Heart right ventricle (tissue), 16 donors: ENCODE measurements at regions of chr3 and their contacts with region 1.

Region 1: GRCh38 chr3:98039322-98040024 is 4.4 kb upstream of the GABRR3 start:
- DNase-seq: peak in 1 of 2 donors; percentile 49
- ATAC-seq: peak; percentile 55 to 89 (median 82)
- H3K4me3 ChIP-seq: peak overlapping the region in 6 of 10 donors; percentile 32 to 40 (median 37)
- H3K27ac ChIP-seq: peak overlapping the region in 1 of 10 donors; percentile 2
- H3K4me1 ChIP-seq: peaks cover 0 to 6% (median 0%) of the 10 kb centered on the region in 9 donors
- H3K27me3 ChIP-seq: peaks cover 0 to 22% (median 10%) of the 10 kb centered on the region in 7 donors
- CTCF ChIP-seq: peak; percentile 70 to 87 (median 84)

Region 2: GRCh38 chr3:98329392-98330124 is 290.1 kb after region 1 on chr3:
- intact Hi-C with region 1: loop called (anchors 2 to 10 kb)
- DNase-seq: peak in 1 of 2 donors; percentile 18
- ATAC-seq: peak in 5 of 8 donors; percentile 25 to 58 (median 52)
- H3K4me3 ChIP-seq: no peak overlapping the region
- H3K27ac ChIP-seq: no peak overlapping the region
- H3K4me1 ChIP-seq: no peaks in the 10 kb centered on the region
- H3K27me3 ChIP-seq: peaks cover 0 to 19% (median 3%) of the 10 kb centered on the region in 7 donors
- CTCF ChIP-seq: peak; percentile 27 to 71 (median 62)

Region 3: GRCh38 chr3:98573181-98573728 is 533.8 kb after region 1 on chr3:
- intact Hi-C with region 1: loop called in 2 of 10 experiments (anchors 10 kb)
- DNase-seq: no peak
- ATAC-seq: no peak
- H3K4me3 ChIP-seq: no peak overlapping the region
- H3K27ac ChIP-seq: no peak overlapping the region
- H3K4me1 ChIP-seq: no peaks in the 10 kb centered on the region
- H3K27me3 ChIP-seq: no peaks in the 10 kb centered on the region
- CTCF ChIP-seq: peak in 7 of 9 donors; percentile 18 to 55 (median 25)